ENCODE measurements at regions of chr6 and their contacts with region 1.

Region 1: GRCh38 chr6:36765594-36766398 is 68.2 kb downstream of the RAB44 start:
- DNase-seq: peak; percentile 88 to 92 (median 91)
- ATAC-seq: peak; percentile 97
- H3K4me3 ChIP-seq: no peak overlapping the region
- H3K27ac ChIP-seq: no peak overlapping the region
- H3K4me1 ChIP-seq: peaks cover 15 to 19% of the 10 kb centered on the region in 2 experiments; a peak in 3 of 5 replicates
- H3K27me3 ChIP-seq: peaks cover 20 to 33% of the 10 kb centered on the region in 2 experiments; a peak in 4 of 5 replicates
- CTCF ChIP-seq: peak; percentile 97 to 99 (median 99)
- EP300 ChIP-seq: peak; percentile 16; the same call in 1 of the 2 replicates
- POLR2A ChIP-seq: no peak
- RAD21 ChIP-seq: peak; percentile 99 to 100

Region 2: DNA sequence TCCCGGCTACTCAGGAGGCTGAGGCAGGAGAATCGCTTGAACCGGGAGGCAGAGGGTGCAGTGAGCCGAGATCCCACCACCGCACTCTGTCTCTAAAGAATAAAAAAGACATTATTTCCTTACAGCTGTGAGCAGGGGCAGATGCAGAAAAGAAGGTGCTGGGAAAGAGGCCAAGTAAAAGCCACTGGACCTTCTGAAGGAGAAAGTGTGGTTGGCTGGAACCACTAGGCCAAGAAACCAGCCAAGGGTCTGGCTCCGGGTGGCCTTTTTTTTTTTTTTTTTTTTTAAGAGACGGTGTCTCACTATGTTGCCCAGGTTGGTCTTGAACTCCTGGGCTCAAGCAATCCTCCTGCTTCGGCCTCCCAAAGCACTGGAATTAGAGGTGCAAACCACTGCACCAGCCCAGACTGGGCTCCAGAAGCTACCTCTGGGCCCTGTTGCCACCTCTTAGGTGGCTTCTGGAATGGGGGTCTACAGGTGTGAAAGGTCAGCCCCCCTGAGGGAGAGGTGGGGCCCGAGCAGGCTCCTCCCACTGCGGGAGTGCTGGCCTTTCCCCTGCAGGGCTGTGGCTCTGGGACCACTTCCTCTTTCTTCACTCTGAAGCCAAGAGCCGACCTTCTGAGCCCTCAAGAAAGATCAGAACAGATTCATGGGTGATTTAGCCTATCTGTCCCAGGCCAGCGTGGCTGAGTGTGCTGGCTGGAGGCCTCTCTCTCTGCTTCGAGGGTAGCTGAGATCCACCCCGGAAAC is 239.4 kb after region 1 on chr6 and contains the start of gene FGD2:
- CTCF ChIA-PET with region 1: no interaction called
- POLR2A ChIA-PET with region 1: no interaction called
- in situ Hi-C with region 1: loop called (anchors 5 kb)
- intact Hi-C with region 1: no loop called
- DNase-seq: peak; percentile 54 to 65 (median 62)
- ATAC-seq: peak; percentile 84
- H3K4me3 ChIP-seq: no peak within 1 kb of the TSS
- H3K27ac ChIP-seq: no peak within 1 kb of the TSS
- H3K4me1 ChIP-seq: peaks cover 2 to 12% of the 10 kb centered on the region in 2 experiments; a peak in 3 of 5 replicates
- H3K27me3 ChIP-seq: peaks cover 25 to 62% of the 10 kb centered on the region in 2 experiments
- CTCF ChIP-seq: no peak
- EP300 ChIP-seq: no peak
- POLR2A ChIP-seq: no peak
- RAD21 ChIP-seq: no peak
- polyA plus RNA-seq, gene FGD2: not detected

Region 3: GRCh38 chr6:37127961-37128862 is 362.4 kb after region 1 on chr6:
- CTCF ChIA-PET with region 1: no interaction called
- POLR2A ChIA-PET with region 1: no interaction called
- in situ Hi-C with region 1: no loop called
- intact Hi-C with region 1: loop called (anchors 5 kb)
- DNase-seq: peak; percentile 65 to 80 (median 72)
- ATAC-seq: peak; percentile 70
- H3K4me3 ChIP-seq: no peak overlapping the region
- H3K27ac ChIP-seq: peak overlapping the region; percentile 73
- H3K4me1 ChIP-seq: peaks cover 50 to 58% of the 10 kb centered on the region in 2 experiments
- H3K27me3 ChIP-seq: no peaks in the 10 kb centered on the region
- CTCF ChIP-seq: peak in 1 of 3 experiments; percentile 20; a peak in 2 of 6 replicates
- EP300 ChIP-seq: no peak; the same call in 1 of the 2 replicates
- POLR2A ChIP-seq: no peak
- RAD21 ChIP-seq: peak; percentile 37 to 42; a peak in 3 of 4 replicates

Region 4: GRCh38 chr6:37222125-37222967 is 456.6 kb after region 1 on chr6:
- CTCF ChIA-PET with region 1: no interaction called
- POLR2A ChIA-PET with region 1: no interaction called
- in situ Hi-C with region 1: no loop called
- intact Hi-C with region 1: no loop called
- DNase-seq: peak; percentile 91 to 95 (median 93)
- ATAC-seq: peak; percentile 99
- H3K4me3 ChIP-seq: peak overlapping the region; percentile 52
- H3K27ac ChIP-seq: no peak overlapping the region
- H3K4me1 ChIP-seq: peaks cover 14 to 22% of the 10 kb centered on the region in 2 experiments; a peak in 4 of 5 replicates
- H3K27me3 ChIP-seq: no peaks in the 10 kb centered on the region
- CTCF ChIP-seq: peak in 2 of 3 experiments; percentile 14 to 44; a peak in 2 of 6 replicates
- EP300 ChIP-seq: no peak; the same call in 1 of the 2 replicates
- POLR2A ChIP-seq: no peak
- RAD21 ChIP-seq: peak; percentile 29 to 43; a peak in 3 of 4 replicates

Region 5: GRCh38 chr6:37303932-37304363 is 538.2 kb after region 1 on chr6:
- CTCF ChIA-PET with region 1: no interaction called
- POLR2A ChIA-PET with region 1: no interaction called
- in situ Hi-C with region 1: no loop called
- intact Hi-C with region 1: loop called (anchors 10 kb)
- DNase-seq: peak; percentile 52 to 74 (median 57)
- ATAC-seq: peak; percentile 83
- H3K4me3 ChIP-seq: no peak overlapping the region
- H3K27ac ChIP-seq: no peak overlapping the region
- H3K4me1 ChIP-seq: peaks cover 20 to 30% of the 10 kb centered on the region in 2 experiments
- H3K27me3 ChIP-seq: no peaks in the 10 kb centered on the region
- CTCF ChIP-seq: peak; percentile 73 to 86 (median 82)
- EP300 ChIP-seq: no peak
- POLR2A ChIP-seq: no peak
- RAD21 ChIP-seq: peak; percentile 35 to 73